Common myeloid progenitor, CD34-positive (primary cell): ENCODE measurements at regions of chr19 and their contacts with region 1.

Region 1: GRCh38 chr19:2391118-2391725 is 31.2 kb downstream of the TMPRSS9 start:
- DNase-seq: peak; percentile 63 to 87 (median 84)
- H3K4me3 ChIP-seq: no peak overlapping the region
- H3K27ac ChIP-seq: no peak overlapping the region
- H3K4me1 ChIP-seq: peaks cover 0 to 20% (median 14%) of the 10 kb centered on the region in 4 experiments
- H3K27me3 ChIP-seq: no peaks in the 10 kb centered on the region

Region 2: GRCh38 chr19:2273356-2274184 is 117.7 kb before region 1 on chr19:
- CTCF ChIA-PET with region 1: interaction called, 24 read pairs
- POLR2A ChIA-PET with region 1: no interaction called
- DNase-seq: peak; percentile 77 to 82 (median 78)
- H3K4me3 ChIP-seq: peak overlapping the region in 4 of 7 experiments; percentile 28 to 54 (median 44)
- H3K27ac ChIP-seq: peak overlapping the region in 1 of 2 experiments; percentile 58
- H3K4me1 ChIP-seq: peaks cover 5 to 44% (median 40%) of the 10 kb centered on the region in 4 experiments
- H3K27me3 ChIP-seq: no peaks in the 10 kb centered on the region

Region 3: DNA sequence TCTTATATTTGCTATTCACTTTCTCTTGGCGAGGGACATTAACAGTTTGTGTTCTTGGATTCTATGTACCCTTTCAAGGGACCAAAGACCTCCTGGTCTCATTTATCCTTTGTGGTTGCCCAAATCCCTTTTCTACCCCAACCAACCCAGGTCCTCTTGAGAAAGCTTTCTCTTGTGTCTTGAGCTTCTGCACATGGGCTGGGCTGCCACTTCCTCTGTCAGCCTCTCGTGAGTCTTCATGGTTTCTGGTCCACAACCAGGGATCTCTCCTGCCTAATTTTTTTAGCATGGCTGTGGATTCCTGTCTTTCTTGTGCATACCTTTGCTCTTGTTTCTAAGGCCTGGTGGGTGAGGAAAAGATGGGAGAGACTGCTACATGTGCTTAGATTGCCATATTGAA is 21.2 kb after region 1 on chr19:
- CTCF ChIA-PET with region 1: interaction called, 10 read pairs
- POLR2A ChIA-PET with region 1: no interaction called
- DNase-seq: peak in 2 of 3 donors; percentile 20 to 25
- H3K4me3 ChIP-seq: no peak overlapping the region
- H3K27ac ChIP-seq: no peak overlapping the region
- H3K4me1 ChIP-seq: peaks cover 0 to 4% (median 0%) of the 10 kb centered on the region in 4 experiments
- H3K27me3 ChIP-seq: no peaks in the 10 kb centered on the region

Region 4: GRCh38 chr19:2423071-2423914 is 32.1 kb after region 1 on chr19:
- CTCF ChIA-PET with region 1: interaction called, 20 read pairs
- POLR2A ChIA-PET with region 1: no interaction called
- DNase-seq: peak; percentile 82 to 97 (median 96)
- H3K4me3 ChIP-seq: peak overlapping the region in 2 of 7 experiments; percentile 46 to 55
- H3K27ac ChIP-seq: peak overlapping the region; percentile 50 to 76
- H3K4me1 ChIP-seq: peaks cover 2 to 65% (median 41%) of the 10 kb centered on the region in 4 experiments
- H3K27me3 ChIP-seq: no peaks in the 10 kb centered on the region

Region 5: GRCh38 chr19:2438178-2438864 is 47.1 kb after region 1 on chr19:
- CTCF ChIA-PET with region 1: no interaction called
- POLR2A ChIA-PET with region 1: no interaction called
- DNase-seq: no peak
- H3K4me3 ChIP-seq: no peak overlapping the region
- H3K27ac ChIP-seq: no peak overlapping the region
- H3K4me1 ChIP-seq: no peaks in the 10 kb centered on the region
- H3K27me3 ChIP-seq: no peaks in the 10 kb centered on the region